AG04449 (cell line): ENCODE measurements at regions of chr22 and their contacts with region 1.

Region 1: GRCh38 chr22:31451709-31452571 is 37.7 kb downstream of the EIF4ENIF1 start:
- DNase-seq: peak; percentile 21
- H3K4me3 ChIP-seq: no peak overlapping the region
- CTCF ChIP-seq: peak; percentile 59

Region 2: GRCh38 chr22:31439808-31440207 is 12.1 kb before region 1 on chr22:
- CTCF ChIA-PET with region 1: interaction called, 25 read pairs
- POLR2A ChIA-PET with region 1: no interaction called
- DNase-seq: no peak
- H3K4me3 ChIP-seq: no peak overlapping the region
- CTCF ChIP-seq: no peak

Region 3: DNA sequence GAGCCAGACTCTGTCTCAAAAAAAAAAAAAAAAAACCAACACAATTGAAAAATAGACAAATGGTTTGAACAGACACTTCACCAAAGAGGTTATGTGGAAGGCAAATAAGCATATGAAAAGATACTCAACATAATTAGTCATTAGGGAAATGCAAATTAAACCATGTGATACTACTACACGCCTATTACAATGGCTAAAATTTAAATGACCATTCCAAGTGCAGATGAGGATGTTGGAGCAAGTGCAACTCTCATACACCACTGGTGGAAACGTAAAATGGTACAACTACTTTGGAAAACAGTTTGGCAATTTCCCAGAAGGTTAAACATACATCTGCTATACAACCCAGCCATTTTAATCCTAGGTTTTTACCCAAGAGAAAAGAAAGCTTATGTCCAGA is 13.4 kb after region 1 on chr22:
- CTCF ChIA-PET with region 1: interaction called, 26 read pairs
- POLR2A ChIA-PET with region 1: interaction called, 3 read pairs
- DNase-seq: no peak
- H3K4me3 ChIP-seq: no peak overlapping the region
- CTCF ChIP-seq: no peak

Region 4: GRCh38 chr22:31481129-31481528 is 29.2 kb after region 1 on chr22:
- CTCF ChIA-PET with region 1: interaction called, 11 read pairs
- POLR2A ChIA-PET with region 1: no interaction called
- DNase-seq: no peak
- H3K4me3 ChIP-seq: no peak overlapping the region
- CTCF ChIP-seq: no peak

Region 5: GRCh38 chr22:31509061-31509762 is 57.3 kb after region 1 on chr22:
- CTCF ChIA-PET with region 1: no interaction called
- POLR2A ChIA-PET with region 1: no interaction called
- DNase-seq: no peak
- H3K4me3 ChIP-seq: no peak overlapping the region
- CTCF ChIP-seq: no peak

Region 6: DNA sequence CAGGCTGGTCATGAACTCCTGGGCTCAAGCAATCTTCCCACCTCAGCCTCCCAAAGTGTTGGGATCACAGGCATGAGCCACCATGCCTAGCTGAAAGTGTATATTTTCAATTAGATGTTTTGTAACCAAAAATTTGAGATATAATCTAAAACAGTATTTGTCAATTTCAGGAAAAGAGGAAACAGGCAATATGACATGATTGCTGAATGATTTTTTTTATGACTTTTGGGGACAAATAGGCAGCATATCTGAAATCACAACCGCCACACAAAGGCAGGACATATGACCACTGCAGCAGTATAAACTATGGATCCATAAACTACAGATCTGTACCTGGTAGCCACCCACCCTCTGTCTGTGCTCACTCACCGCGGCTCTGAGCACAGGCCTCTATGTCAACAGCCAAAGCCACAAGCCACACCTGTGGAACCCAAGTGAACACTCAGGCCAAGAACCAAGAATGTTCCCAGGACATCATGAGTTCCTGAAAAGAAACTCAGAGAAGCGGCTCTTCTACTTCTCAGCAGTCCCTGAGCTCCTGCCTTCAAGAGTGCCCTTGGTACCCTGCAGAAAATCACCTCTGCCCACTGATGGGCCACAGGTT is 187.6 kb after region 1 on chr22:
- CTCF ChIA-PET with region 1: interaction called, 28 read pairs
- POLR2A ChIA-PET with region 1: no interaction called
- DNase-seq: no peak
- H3K4me3 ChIP-seq: no peak overlapping the region
- CTCF ChIP-seq: no peak